Activated CD8-positive, alpha-beta T cell treated with anti-CD3 and anti-CD28 coated beads for 36 hours (primary cell): ENCODE measurements at regions of chr2 and their contacts with region 1.

Region 1: DNA sequence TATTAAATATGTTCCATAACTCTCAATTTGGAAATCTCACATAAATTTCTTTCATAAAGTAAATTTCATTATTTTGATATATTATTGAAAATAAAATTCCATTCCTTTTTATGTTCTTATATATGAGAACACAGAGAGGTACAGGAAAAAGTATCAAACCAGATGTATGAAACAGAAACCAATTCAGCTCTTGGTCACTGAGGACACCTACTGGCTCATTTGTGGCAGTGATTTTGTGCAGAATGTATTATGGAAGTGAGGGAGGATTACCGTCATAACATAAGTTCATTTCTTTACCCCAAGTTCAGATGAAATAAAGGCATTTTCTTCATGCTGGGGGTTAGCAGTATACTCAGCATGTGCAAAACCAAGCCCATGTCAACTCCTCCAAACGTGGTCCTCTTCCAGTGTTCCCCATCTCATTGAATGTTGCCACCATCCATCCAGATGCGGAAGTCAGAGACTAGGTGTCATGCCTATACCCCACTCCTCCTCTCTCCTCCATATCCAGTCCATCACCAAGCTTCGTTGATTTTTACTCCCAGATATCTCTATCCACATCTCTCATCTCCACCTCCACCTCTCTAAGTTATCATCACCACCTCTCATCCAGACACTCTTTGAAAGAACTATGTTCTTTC is 41.7 kb upstream of the MALL start:
- DNase-seq: peak; percentile 53
- ATAC-seq: peak; percentile 62
- H3K4me3 Mint-ChIP-seq: no peak overlapping the region
- H3K27ac Mint-ChIP-seq: no peak overlapping the region
- H3K4me1 Mint-ChIP-seq: peaks cover 11% of the 10 kb centered on the region
- H3K27me3 Mint-ChIP-seq: peaks cover 2% of the 10 kb centered on the region
- CTCF ChIP-seq: peak; percentile 78

Region 2: DNA sequence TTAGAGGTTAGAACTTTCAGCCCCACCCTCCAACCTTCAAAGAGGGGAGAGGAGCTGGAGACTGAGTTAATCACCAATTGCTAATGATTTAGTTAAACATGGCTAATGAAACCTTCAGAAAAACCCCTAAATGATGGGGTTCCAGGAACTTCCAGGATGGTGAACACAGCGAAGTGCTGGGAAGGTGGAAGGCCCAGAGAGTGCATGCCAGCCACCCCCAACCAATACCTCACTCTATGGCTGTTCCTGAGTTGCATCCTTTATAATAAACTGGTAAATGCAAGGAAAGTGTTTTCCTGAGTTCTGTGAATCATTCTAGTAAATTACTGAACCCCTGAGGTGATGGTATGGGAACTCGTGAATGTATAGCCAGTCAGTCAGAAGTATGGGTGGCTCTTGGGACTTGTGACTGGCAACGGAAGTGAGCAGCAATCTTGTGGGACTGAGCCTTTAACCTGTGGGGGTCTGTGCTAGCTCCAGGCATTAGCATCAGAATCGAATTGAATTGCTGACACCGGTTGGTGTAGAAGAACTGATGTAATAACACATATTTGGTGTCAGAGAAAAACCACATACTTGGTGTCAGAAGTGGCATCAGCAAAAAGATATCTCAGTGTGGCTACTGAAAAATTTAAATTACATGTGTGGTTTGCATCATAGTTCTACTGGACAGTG is 10.2 kb after region 1 on chr2:
- CTCF ChIA-PET with region 1: interaction called, 13 read pairs
- POLR2A ChIA-PET with region 1: no interaction called
- intact Hi-C with region 1: no loop called
- DNase-seq: no peak
- ATAC-seq: no peak
- H3K4me3 Mint-ChIP-seq: no peak overlapping the region
- H3K27ac Mint-ChIP-seq: no peak overlapping the region
- H3K4me1 Mint-ChIP-seq: peaks cover 4% of the 10 kb centered on the region
- H3K27me3 Mint-ChIP-seq: no peaks in the 10 kb centered on the region
- CTCF ChIP-seq: no peak

Region 3: DNA sequence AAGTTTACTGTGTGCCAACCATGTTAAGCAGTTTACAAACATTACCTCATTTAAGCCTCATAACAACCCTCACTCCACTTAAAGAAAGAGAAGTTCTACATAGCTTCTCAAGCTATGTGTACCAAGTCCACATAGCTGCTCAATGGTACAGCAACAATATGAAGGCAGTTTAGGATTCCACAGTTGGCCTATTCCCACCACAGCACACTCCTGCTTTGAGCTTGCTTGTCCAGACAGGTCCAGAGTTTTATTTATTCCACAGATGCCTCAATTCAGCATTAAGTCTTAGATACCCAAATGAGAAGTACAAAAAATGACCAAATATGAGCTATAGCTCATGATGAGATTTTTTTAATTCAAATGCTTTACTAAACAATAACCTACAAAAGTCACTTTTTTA is 22.8 kb after region 1 on chr2:
- CTCF ChIA-PET with region 1: interaction called, 10 read pairs
- POLR2A ChIA-PET with region 1: no interaction called
- intact Hi-C with region 1: no loop called
- DNase-seq: no peak
- ATAC-seq: no peak
- H3K4me3 Mint-ChIP-seq: no peak overlapping the region
- H3K27ac Mint-ChIP-seq: no peak overlapping the region
- H3K4me1 Mint-ChIP-seq: no peaks in the 10 kb centered on the region
- H3K27me3 Mint-ChIP-seq: peaks cover 9% of the 10 kb centered on the region
- CTCF ChIP-seq: no peak

Region 4: GRCh38 chr2:110219496-110220189 is 62.4 kb after region 1 on chr2:
- CTCF ChIA-PET with region 1: no interaction called
- POLR2A ChIA-PET with region 1: no interaction called
- intact Hi-C with region 1: no loop called
- DNase-seq: no peak
- ATAC-seq: no peak
- H3K4me3 Mint-ChIP-seq: no peak overlapping the region
- H3K27ac Mint-ChIP-seq: no peak overlapping the region
- H3K4me1 Mint-ChIP-seq: no peaks in the 10 kb centered on the region
- H3K27me3 Mint-ChIP-seq: peaks cover 37% of the 10 kb centered on the region
- CTCF ChIP-seq: no peak

Region 5: GRCh38 chr2:110788976-110789375 is 631.7 kb after region 1 on chr2:
- CTCF ChIA-PET with region 1: no interaction called
- POLR2A ChIA-PET with region 1: no interaction called
- intact Hi-C with region 1: no loop called
- DNase-seq: no peak
- ATAC-seq: no peak
- H3K4me3 Mint-ChIP-seq: no peak overlapping the region
- H3K27ac Mint-ChIP-seq: no peak overlapping the region
- H3K4me1 Mint-ChIP-seq: no peaks in the 10 kb centered on the region
- H3K27me3 Mint-ChIP-seq: peaks cover 31% of the 10 kb centered on the region
- CTCF ChIP-seq: no peak